ENCODE measurements at regions of chr2 and their contacts with region 1.

Region 1: DNA sequence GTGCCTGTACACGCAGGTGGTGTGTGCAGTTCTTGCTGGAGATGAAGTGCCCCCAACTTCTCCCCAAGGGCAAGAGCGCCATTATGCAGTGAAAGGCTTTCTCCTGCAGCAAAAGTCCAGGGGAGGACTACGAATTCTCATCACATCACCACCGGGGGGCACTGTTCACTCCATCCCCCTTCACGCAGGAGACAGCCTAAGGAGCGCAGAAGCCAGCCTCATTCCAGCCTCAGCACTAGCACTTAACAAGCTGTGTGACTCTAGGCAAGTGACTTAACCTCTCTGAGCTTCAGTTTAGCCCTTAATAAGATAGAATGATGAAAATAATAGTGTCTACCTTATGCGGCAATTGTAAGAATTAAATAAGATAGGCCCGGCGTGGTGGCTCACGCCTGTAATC is 32.3 kb downstream of the DNMT3A start:
- DNase-seq: peak; percentile 81
- H3K4me3 Mint-ChIP-seq: no peak overlapping the region
- H3K27ac Mint-ChIP-seq: peak overlapping the region; percentile 44
- H3K4me1 Mint-ChIP-seq: peaks cover 82% of the 10 kb centered on the region
- H3K27me3 Mint-ChIP-seq: no peaks in the 10 kb centered on the region

Region 2: DNA sequence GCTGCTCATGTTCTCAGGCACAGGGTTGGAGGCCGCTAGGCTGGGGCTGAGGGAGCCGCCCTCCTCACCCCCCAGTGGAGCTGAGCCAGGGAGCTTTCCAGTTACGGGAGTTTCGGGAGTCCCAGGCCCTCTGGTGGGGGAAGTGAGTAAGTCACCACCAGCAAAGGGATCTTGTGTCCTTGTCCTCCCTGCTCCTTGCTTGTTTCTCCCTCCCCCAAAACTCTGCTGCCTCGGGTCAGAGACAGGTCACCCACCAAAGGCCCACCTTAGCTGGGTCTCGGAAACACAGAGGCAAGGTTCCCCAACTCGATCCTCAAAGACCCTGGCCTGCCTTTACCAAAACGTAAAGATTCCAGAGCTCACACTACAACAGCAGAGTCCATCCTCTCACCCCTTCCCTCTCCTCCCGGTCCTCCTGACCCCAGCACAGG is 80.5 kb before region 1 on chr2:
- CTCF ChIA-PET with region 1: no interaction called
- intact Hi-C with region 1: no loop called
- DNase-seq: no peak
- H3K4me3 Mint-ChIP-seq: no peak overlapping the region
- H3K27ac Mint-ChIP-seq: no peak overlapping the region
- H3K4me1 Mint-ChIP-seq: peaks cover 11% of the 10 kb centered on the region
- H3K27me3 Mint-ChIP-seq: no peaks in the 10 kb centered on the region

Region 3: DNA sequence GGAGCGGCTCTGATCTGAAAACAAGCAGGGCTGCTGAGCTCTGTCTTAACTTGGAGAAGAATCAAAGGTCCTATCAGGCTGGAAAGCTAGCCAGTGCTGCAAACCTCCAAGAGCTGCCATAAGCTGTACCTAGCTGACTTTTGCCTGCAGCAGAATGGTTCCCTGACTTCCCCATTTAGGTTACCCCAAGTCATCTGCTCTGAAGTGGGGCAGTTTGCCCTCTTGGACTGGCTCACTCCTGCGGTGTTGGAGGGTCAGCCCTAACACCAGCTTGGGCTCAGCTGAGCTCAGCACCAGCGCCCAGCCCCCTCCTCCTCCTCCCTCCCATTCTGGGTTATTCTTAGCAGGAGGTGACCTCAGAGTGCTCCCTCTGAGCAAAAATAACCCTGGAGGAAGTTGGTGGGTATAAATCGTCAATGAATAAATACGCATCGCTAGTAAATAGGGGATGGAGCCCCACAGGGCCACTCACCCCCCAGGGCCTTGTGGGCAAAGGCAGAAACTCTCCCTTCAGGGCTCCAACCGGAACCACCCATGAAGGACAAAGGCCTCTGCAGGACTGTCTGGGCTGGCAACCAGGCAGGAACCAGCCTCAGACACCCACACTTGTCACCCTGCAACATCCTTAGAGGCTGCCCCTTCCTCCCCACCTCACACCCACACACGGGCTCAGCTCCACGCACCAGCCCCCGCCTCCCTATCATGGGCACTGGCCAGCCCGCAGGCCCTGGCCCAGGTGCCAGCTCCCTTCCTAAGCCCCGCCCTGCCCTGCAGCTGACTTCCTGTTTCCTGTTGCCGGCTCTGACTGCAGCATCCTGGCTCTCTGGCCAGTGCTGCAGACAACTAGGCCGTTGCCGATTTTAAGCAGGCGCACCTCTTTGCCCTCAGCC is 14.6 kb before region 1 on chr2:
- CTCF ChIA-PET with region 1: interaction called, 10 read pairs
- intact Hi-C with region 1: loop called (anchors 1 kb)
- DNase-seq: peak; percentile 89
- H3K4me3 Mint-ChIP-seq: peak overlapping the region; percentile 68
- H3K27ac Mint-ChIP-seq: peak overlapping the region; percentile 90
- H3K4me1 Mint-ChIP-seq: peaks cover 60% of the 10 kb centered on the region
- H3K27me3 Mint-ChIP-seq: no peaks in the 10 kb centered on the region

Region 4: DNA sequence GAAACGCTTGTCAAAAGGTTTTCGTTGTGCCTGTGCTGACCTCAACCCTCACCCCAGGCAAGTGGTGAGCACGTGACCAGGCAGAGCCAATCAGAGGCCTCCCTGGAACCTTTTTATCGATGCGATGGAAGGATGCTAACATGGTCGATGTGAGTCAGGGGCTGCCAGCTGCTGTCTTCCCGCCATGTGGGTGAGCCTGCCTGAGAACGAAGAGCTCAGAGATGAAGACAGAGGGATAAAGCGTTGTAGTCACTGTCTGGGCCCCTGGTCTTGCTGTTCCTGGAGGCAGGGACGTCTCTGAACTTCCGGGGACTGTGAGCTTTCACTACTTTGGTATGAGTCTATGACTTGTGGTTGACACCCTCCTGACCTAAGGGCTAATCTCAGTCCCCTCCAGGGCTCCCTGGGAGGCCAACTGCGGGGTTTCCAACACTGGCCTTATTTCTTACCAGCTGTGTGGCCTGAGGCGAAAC is 13.7 kb after region 1 on chr2:
- CTCF ChIA-PET with region 1: interaction called, 19 read pairs
- intact Hi-C with region 1: loop called (anchors 1 kb)
- DNase-seq: peak; percentile 54
- H3K4me3 Mint-ChIP-seq: peak overlapping the region; percentile 34
- H3K27ac Mint-ChIP-seq: peak overlapping the region; percentile 91
- H3K4me1 Mint-ChIP-seq: peaks cover 64% of the 10 kb centered on the region
- H3K27me3 Mint-ChIP-seq: no peaks in the 10 kb centered on the region

Region 5: DNA sequence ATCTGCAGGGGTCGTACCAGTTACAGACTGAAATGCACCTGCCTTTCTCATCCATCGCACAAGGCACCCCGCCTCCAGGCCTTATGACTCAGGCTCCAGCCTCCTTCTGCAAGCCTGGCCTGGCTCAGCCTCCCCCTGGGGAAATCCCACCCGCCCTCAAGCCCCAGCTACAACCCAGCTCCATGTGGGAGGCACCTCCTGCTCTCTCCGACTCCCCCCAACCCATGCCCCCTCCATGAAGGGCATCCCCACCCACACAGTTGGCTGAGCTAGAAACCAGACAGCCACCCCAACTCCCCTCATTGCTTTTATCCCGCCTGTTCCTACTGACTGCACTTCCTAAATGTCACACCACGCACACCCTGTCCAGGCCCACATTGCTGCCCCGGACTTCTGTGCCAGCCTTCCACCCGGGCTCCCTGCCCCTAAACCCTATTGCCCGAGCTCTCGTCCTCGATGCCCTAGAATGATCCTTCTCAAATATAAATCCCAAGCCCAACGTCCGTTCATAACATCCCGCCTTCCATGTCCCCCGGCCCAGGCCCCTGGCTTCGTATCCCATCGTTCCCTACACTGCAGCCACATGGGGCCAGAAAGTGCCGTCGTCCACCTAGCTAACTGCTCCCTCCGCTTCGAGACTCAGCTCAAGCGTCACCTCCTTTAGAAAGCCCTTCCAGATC is 22.4 kb after region 1 on chr2:
- CTCF ChIA-PET with region 1: interaction called, 13 read pairs
- intact Hi-C with region 1: loop called (anchors 1 kb)
- DNase-seq: peak; percentile 83
- H3K4me3 Mint-ChIP-seq: no peak overlapping the region
- H3K27ac Mint-ChIP-seq: no peak overlapping the region
- H3K4me1 Mint-ChIP-seq: peaks cover 64% of the 10 kb centered on the region
- H3K27me3 Mint-ChIP-seq: no peaks in the 10 kb centered on the region

Measured in activated naive CD4-positive, alpha-beta T cell treated with anti-CD3 and anti-CD28 coated beads for 36 hours (primary cell).